ENCODE measurements at regions of chr14 and their contacts with region 1.

Region 1: DNA sequence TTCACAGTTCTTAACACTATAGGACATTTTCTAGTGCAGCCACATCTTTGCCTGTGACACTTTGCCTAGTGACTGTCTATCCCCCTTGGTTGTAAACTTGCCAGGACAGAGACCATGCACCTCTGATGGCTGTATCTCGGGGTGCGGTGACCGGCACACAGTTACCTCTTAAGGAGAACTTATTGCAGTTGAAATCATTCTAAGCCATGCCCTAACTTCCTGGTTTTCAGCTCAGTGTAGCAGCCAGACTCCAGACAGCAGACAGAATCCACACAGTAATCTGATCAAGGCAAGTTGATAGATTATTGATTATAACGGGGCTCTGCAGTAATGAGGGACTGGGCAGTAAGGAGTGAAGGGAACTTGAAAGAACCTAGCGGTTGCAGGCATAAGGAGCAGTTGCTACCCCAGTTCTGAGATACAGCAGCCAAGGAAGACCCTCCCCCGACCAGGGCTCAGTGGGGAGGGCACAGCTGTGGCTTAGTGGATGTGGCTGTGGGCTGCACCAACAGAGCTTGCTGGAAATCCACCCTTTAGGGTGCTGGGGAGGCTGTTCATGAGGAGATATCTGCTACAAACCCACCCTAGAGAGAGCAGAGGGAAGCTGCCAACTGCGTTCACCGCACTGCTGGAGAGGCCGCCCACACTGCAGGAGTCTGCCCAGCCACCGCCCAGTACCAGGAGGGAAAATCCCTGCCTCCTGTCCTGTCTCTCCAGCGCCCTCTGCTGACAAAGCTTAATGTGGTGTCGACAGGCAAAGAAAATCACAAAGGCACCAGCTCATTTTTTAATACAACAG is 58.2 kb upstream of the BEGAIN start:
- DNase-seq: peak; percentile 63
- H3K4me3 ChIP-seq: no peak overlapping the region
- H3K27ac ChIP-seq: no peak overlapping the region
- H3K4me1 ChIP-seq: peaks cover 3% of the 10 kb centered on the region
- CTCF ChIP-seq: peak; percentile 81

Region 2: DNA sequence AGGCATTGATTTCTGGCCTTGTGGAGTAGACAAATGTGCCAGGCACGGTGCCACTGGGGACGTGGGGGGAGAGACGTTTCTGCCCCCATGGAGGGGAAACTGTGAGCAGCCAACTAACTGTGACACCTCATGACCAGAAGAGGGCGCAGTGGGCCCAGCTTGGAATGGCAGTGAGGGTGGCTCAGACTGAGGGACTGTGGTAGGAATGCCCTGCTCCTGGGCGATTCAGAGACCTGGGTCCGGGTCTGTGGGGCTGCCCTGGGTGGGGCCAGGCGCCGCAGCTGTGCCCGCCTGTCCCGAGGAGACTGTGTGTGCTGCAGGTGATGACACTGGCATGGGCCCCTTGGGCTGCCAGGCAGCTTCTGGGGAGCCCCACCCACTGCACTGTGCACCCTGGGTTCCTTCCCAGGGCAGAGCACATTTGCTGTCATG is 261.6 kb before region 1 on chr14:
- CTCF ChIA-PET with region 1: interaction called, 3 read pairs
- POLR2A ChIA-PET with region 1: interaction called, 3 read pairs
- intact Hi-C with region 1: loop called (anchors 2 kb)
- DNase-seq: peak; percentile 65
- H3K4me3 ChIP-seq: no peak overlapping the region
- H3K27ac ChIP-seq: no peak overlapping the region
- H3K4me1 ChIP-seq: no peaks in the 10 kb centered on the region
- CTCF ChIP-seq: peak; percentile 91

Region 3: DNA sequence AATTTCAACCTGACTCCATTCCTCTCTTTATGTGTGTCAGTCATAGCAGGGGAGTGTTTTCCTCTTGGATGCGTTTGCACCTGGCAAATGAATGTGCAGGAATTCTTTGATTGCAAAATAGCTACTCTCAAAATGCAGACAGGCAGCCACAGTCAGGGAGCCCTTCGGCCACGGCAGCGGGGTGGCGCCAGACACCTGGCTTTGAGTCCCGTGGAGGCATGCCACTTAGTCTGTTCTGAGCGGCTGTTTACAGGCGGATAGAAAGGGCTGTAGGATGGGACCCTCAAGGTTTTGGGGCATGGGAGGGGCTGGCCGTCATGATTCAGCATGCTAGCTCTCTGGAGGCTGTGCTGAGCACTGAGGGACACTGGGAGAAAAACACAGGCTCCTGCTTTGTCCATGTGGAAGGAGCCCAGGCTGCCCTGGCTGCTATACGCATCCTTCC is 205.2 kb before region 1 on chr14:
- CTCF ChIA-PET with region 1: no interaction called
- POLR2A ChIA-PET with region 1: no interaction called
- intact Hi-C with region 1: loop called (anchors 5 kb)
- DNase-seq: peak; percentile 32
- H3K4me3 ChIP-seq: no peak overlapping the region
- H3K27ac ChIP-seq: no peak overlapping the region
- H3K4me1 ChIP-seq: no peaks in the 10 kb centered on the region
- CTCF ChIP-seq: peak; percentile 74

Region 4: DNA sequence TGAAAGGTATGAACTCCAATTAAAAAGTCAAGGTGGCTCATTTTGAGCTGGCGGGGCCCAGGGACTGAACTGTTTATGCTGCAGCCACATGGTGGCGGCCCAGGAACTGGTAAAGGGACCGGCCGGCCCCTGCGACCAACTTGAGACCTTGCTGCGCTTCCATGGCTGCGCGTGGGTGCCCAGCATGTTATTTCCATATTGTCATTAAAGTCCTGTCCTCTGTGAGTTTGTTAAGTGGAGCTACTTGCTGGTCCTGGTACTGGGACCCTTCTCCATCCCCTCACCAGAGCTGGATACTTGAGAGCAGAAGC is 120.5 kb before region 1 on chr14:
- CTCF ChIA-PET with region 1: no interaction called
- POLR2A ChIA-PET with region 1: no interaction called
- intact Hi-C with region 1: loop called (anchors 10 kb)
- DNase-seq: peak; percentile 9
- H3K4me3 ChIP-seq: no peak overlapping the region
- H3K27ac ChIP-seq: no peak overlapping the region
- H3K4me1 ChIP-seq: no peaks in the 10 kb centered on the region
- CTCF ChIP-seq: peak; percentile 74

Region 5: DNA sequence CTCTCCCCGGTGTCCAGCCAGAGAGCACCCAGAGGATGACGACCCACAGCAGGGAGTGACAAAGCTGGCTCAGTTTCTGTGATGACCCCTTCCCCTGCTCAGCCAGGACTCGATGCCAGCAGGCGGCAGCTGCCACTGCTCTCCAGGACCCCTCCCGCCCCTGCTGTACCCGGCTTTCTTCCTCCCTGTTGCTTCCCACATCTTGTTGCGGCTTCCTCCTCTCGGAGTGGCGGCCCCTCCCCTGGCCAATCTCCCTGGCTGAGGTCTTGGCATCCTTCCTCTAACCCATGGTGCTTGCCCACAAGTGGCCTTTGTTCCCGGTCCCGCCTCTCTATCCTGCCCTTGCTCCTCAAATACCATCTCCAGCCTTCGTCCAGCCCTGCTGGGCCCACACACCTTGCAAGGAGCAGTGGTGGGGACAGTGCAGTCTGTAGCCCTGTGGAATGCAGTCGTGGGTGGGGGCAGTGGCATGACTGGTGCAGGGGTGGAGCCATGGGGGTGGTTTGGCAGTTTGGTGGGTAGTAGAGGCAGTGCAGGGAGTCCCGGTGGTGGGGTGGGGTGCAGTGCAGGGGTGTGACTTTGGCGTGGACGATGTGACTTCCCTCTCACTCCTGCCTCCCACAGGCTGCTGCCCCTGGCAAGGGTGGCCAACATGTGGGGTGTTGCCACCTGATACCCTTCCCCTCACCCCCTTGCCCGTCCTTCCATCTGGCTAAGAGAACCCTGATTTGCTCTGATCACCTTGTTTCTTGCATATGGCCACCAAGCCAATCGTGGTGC is 41.9 kb before region 1 on chr14:
- CTCF ChIA-PET with region 1: no interaction called
- POLR2A ChIA-PET with region 1: no interaction called
- intact Hi-C with region 1: no loop called
- DNase-seq: no peak
- H3K4me3 ChIP-seq: no peak overlapping the region
- H3K27ac ChIP-seq: no peak overlapping the region
- H3K4me1 ChIP-seq: no peaks in the 10 kb centered on the region
- CTCF ChIP-seq: no peak

Region 6: GRCh38 chr14:100629696-100630095 is 15.7 kb before region 1 on chr14:
- CTCF ChIA-PET with region 1: no interaction called
- POLR2A ChIA-PET with region 1: no interaction called
- intact Hi-C with region 1: no loop called
- DNase-seq: no peak
- H3K4me3 ChIP-seq: no peak overlapping the region
- H3K27ac ChIP-seq: no peak overlapping the region
- H3K4me1 ChIP-seq: no peaks in the 10 kb centered on the region
- CTCF ChIP-seq: no peak

Region 7: DNA sequence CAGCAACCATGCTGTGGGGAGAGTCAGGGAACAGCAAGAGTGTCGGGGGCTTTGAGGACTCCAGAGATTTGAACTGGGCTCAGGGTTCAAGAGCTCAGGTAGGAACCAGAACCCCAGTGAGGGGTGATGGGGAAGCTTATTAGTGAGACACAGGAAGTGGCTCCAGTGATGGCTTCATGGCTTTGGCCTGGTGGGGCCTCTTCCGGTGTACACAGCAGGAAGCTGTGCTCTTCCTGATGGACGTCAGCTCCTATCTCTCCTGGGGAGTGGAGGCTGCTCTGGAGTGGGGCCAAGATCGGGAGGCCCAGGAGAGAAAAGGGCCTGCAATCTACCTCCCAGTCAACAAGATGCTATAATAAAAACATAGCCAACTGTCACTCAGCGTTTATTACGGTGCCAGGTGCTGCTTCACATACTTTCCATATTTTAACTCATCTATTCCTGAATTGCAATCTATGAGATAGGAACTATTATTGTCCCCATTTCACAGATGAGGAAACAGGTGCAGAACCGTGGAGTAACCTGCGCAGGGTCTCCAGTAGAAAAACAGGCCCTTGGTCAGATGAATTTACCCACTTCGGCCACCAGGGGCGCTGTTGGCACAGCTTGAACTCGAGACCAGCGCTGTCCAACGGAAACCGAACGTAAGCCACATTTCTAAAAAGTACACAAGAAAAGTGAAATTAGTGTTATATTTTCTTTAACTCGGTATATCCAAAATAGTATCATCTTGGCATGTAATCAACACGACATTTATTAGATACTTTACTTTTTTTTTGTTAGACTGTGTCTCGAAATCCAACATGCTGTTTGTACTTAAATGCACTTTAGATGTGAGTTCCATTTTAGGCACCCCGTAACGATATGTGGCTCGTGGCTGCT is 17.7 kb after region 1 on chr14:
- CTCF ChIA-PET with region 1: no interaction called
- POLR2A ChIA-PET with region 1: no interaction called
- intact Hi-C with region 1: no loop called
- DNase-seq: peak; percentile 65
- H3K4me3 ChIP-seq: no peak overlapping the region
- H3K27ac ChIP-seq: no peak overlapping the region
- H3K4me1 ChIP-seq: no peaks in the 10 kb centered on the region
- CTCF ChIP-seq: peak; percentile 98

Region 8: DNA sequence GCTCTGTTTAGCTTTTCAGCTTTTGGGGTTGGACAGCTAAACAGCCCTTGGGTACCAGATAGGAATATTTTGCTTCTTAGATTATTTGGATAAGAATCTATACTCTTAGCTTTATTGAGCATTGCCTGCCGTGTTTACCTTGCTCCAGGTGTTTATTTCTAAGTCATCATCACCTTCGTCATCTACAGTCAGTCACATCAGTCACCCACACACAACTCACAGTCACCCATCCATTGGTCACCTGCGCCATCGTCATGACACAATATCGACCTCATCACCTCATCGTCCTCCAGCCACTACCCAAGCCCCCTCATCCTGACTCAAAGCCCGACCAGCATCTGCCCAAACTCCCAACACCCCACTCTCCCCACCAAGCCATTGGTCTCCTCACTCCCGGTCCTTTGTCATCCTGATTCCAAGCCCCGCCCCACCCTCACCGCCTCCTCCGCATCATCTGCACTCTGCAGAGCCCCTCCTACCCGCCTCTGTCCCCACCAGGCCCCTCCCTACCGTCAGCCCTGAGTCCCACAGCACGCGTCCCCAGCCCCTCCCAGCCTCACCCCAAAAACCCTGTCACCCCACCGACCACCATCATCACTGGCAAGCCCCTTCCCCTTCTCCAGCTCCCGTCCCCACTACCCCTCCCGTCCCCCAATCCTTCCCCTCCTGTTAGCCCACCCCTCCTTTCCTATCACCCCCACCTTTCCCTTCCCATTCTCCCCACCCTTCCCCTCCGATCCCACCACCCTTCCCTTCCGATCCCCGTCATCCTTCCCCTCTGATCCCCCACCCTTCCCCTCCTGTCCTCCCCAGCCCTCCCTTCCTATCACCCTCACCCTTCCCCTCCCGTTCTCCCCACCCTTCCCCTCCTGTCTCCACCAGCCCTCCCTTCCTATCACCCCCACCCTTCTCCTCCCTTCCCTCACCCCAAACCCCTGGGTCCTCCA is 91.1 kb after region 1 on chr14:
- CTCF ChIA-PET with region 1: no interaction called
- POLR2A ChIA-PET with region 1: no interaction called
- intact Hi-C with region 1: no loop called
- DNase-seq: no peak
- H3K4me3 ChIP-seq: no peak overlapping the region
- H3K27ac ChIP-seq: no peak overlapping the region
- H3K4me1 ChIP-seq: no peaks in the 10 kb centered on the region
- CTCF ChIP-seq: no peak